ENCODE measurements at regions of chr18 and their contacts with region 1.

Region 1: GRCh38 chr18:12947355-12948041 is at the start of gene SEH1L:
- DNase-seq: peak; percentile 93 to 99
- H3K4me3 ChIP-seq: peak within 1 kb of the TSS; percentile 78 to 87
- H3K27ac ChIP-seq: peak within 1 kb of the TSS; percentile 98
- H3K4me1 ChIP-seq: peaks cover 5 to 26% of the 10 kb centered on the region in 2 donors
- H3K27me3 ChIP-seq: no peaks in the 10 kb centered on the region
- CTCF ChIP-seq: no peak
- total RNA-seq, gene SEH1L: 16.3 TPM

Region 2: GRCh38 chr18:12287684-12288402 is 659.7 kb before region 1 on chr18:
- intact Hi-C with region 1: loop called (anchors 5 kb)
- DNase-seq: peak; percentile 41 to 94
- H3K4me3 ChIP-seq: peak overlapping the region; percentile 41 to 65
- H3K27ac ChIP-seq: peak overlapping the region; percentile 85 to 86
- H3K4me1 ChIP-seq: peaks cover 5 to 7% of the 10 kb centered on the region in 2 donors
- H3K27me3 ChIP-seq: no peaks in the 10 kb centered on the region
- CTCF ChIP-seq: no peak

Region 3: DNA sequence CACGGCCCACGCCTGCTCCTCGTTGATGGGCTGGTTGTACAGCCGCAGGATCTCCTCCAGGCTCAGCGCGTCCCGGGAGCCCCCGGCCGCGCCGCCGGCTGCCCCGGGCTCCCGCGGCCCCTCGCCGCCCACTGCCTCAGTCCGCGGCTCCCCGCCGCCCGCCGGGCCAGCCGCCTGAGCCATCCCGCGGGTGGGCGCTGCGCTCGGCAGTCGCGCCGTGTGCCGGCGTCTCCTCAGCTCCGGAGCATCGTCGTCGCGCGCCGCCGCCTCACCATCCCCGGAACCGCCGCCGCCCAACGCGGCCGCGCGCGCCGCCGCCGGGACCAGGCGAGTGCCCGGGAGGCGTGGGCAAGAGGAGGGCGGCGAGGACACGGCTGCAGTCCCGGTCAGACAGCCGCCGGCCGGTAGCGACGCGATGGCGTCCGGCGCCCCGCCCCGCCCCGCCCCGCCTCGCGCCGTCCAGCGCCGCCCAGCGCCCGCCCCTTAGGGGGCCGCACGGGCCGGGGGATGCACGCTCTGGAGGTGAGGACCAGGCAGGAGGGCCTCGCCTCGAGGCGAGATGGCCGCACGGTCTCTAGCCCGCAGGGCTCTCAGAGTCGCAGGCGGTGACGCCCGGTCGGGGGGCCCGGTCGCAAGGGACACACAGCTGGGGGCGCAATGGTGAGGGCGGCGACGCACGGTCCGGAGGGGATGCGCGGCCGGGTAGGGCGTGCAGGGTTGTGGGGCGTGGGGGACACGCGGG is 289.6 kb before region 1 on chr18 and contains the start of gene SPIRE1:
- intact Hi-C with region 1: loop called (anchors 2 kb)
- DNase-seq: peak in 1 of 2 donors; percentile 86
- H3K4me3 ChIP-seq: peak within 1 kb of the TSS; percentile 91 to 94
- H3K27ac ChIP-seq: peak within 1 kb of the TSS; percentile 99 to 100
- H3K4me1 ChIP-seq: peaks cover 0 to 22% of the 10 kb centered on the region in 2 donors
- H3K27me3 ChIP-seq: no peaks in the 10 kb centered on the region
- CTCF ChIP-seq: peak in 1 of 3 experiments; percentile 7
- total RNA-seq, gene SPIRE1: 16.9 TPM

Region 4: GRCh38 chr18:12883684-12884405 is 63.7 kb before region 1 on chr18 and contains the start of gene PTPN2:
- intact Hi-C with region 1: loop called (anchors 1 kb)
- DNase-seq: peak; percentile 85 to 96
- H3K4me3 ChIP-seq: peak within 1 kb of the TSS; percentile 71 to 88
- H3K27ac ChIP-seq: peak within 1 kb of the TSS; percentile 99
- H3K4me1 ChIP-seq: peaks cover 0 to 6% of the 10 kb centered on the region in 2 donors
- H3K27me3 ChIP-seq: no peaks in the 10 kb centered on the region
- CTCF ChIP-seq: no peak
- total RNA-seq, gene PTPN2: 81.8 TPM

Region 5: GRCh38 chr18:13381944-13382365 is 434.5 kb after region 1 on chr18:
- intact Hi-C with region 1: loop called (anchors 5 kb)
- DNase-seq: peak; percentile 38 to 91
- H3K4me3 ChIP-seq: peak overlapping the region; percentile 35 to 55
- H3K27ac ChIP-seq: peak overlapping the region; percentile 95 to 96
- H3K4me1 ChIP-seq: peaks cover 15 to 52% of the 10 kb centered on the region in 2 donors
- H3K27me3 ChIP-seq: no peaks in the 10 kb centered on the region
- CTCF ChIP-seq: no peak

Measured in ascending aorta (tissue), 2 donors.